HCT116 (cell line): ENCODE measurements at regions of chr4 and their contacts with region 1.

Region 1: GRCh38 chr4:6546681-6547447 is 28.1 kb upstream of the MAN2B2 start:
- DNase-seq: peak; percentile 57
- ATAC-seq: peak; percentile 82
- H3K4me3 ChIP-seq: no peak overlapping the region
- H3K27ac ChIP-seq: no peak overlapping the region
- H3K4me1 ChIP-seq: peaks cover 0 to 3% of the 10 kb centered on the region in 2 experiments; a peak in 1 of 4 replicates
- H3K27me3 ChIP-seq: peaks cover 28% of the 10 kb centered on the region
- CTCF ChIP-seq: peak; percentile 87 to 97 (median 94)
- POLR2A ChIP-seq: no peak
- RAD21 ChIP-seq: peak; percentile 80

Region 2: DNA sequence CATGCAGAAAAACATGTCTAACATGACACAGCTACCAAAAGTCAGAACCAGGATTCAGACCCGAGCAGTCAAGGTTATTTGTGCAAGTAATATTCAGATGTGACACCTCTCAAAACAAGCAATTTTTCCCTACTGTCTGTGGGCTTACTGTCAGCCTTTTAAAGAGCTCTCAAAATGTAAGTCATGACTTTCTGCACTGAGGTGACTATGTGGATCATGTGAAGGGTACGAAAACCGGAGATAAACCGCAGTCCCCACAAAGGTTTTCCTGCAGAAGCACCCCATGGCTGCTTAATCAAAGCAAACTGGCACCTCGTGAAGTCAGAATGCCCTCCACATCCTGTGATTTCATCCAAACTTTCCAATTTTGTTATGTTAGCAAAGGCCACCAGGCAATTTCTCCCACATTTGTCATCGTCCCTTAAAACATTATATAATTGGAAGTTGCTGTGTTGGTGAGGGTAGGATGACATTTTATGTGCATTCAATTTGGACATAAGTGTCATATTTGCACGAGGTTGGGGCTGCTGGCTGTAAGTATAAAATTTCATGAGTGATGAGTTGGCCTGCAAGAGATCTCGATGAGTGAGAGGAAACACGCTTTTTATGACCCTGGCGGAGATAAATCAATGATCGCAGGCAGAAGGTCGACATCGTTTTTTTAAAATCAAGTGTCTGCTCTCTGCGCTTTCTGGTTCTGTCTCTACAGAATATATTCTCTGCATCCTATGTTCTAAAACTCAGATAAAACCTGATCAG is 1334.4 kb before region 1 on chr4:
- CTCF ChIA-PET with region 1: no interaction called
- POLR2A ChIA-PET with region 1: no interaction called
- RAD21 ChIA-PET with region 1: no interaction called
- intact Hi-C with region 1: no loop called
- DNase-seq: no peak
- ATAC-seq: no peak
- H3K4me3 ChIP-seq: no peak overlapping the region
- H3K27ac ChIP-seq: no peak overlapping the region
- H3K4me1 ChIP-seq: no peaks in the 10 kb centered on the region
- H3K27me3 ChIP-seq: peaks cover 52% of the 10 kb centered on the region
- CTCF ChIP-seq: no peak
- POLR2A ChIP-seq: no peak
- RAD21 ChIP-seq: no peak

Region 3: GRCh38 chr4:6437826-6438238 is 109.0 kb before region 1 on chr4:
- CTCF ChIA-PET with region 1: no interaction called
- POLR2A ChIA-PET with region 1: no interaction called
- RAD21 ChIA-PET with region 1: no interaction called
- intact Hi-C with region 1: no loop called
- DNase-seq: no peak
- ATAC-seq: no peak
- H3K4me3 ChIP-seq: no peak overlapping the region
- H3K27ac ChIP-seq: no peak overlapping the region
- H3K4me1 ChIP-seq: no peaks in the 10 kb centered on the region; a peak in 1 of 4 replicates
- H3K27me3 ChIP-seq: no peaks in the 10 kb centered on the region
- CTCF ChIP-seq: no peak
- POLR2A ChIP-seq: no peak
- RAD21 ChIP-seq: no peak

Region 4: DNA sequence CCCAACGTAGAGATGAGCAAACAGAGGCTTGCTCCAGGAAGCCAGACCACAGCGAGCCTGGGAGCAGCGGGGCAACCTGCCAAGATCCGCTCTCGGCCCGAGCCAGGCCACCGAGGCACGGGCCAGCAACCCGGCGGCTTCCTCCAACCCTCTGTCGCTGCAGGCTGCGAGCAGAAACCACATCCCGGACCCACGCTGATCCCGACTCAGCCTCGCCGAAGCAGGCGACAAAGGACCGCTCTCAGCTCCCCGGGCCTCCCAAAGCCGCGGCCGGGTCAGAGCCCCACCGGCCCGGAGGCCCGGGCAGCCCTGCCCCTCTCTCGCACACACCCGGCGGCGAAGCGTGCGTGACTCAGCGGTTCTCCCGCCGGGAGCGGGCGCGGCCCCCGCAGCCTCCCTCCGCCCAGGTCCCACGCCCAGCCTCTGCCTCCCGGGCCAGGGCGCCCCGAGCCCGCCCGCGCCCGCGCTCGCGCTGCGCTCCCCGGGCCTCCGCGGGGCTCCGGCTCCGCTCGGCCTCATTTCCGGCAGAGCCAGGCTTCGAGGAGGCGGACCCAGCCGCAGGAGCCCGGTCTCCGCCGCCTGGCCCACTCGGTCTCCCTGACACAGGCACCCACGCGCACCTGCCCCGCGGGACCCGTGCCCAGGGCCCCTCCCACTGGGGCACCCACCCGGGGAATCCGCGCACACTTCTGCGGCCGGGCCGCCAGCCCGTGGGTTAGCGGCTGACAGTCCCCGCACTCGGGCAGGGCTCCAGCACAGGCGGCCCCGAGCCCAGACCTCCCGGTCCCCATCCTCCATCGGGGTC is 76.2 kb before region 1 on chr4:
- CTCF ChIA-PET with region 1: interaction called, 6 read pairs
- POLR2A ChIA-PET with region 1: no interaction called
- RAD21 ChIA-PET with region 1: no interaction called
- intact Hi-C with region 1: loop called (anchors 5 kb)
- DNase-seq: no peak
- ATAC-seq: peak; percentile 67
- H3K4me3 ChIP-seq: peak overlapping the region; percentile 58 to 73
- H3K27ac ChIP-seq: peak overlapping the region; percentile 82
- H3K4me1 ChIP-seq: peaks cover 5 to 36% of the 10 kb centered on the region in 2 experiments; a peak in 3 of 4 replicates
- H3K27me3 ChIP-seq: no peaks in the 10 kb centered on the region
- CTCF ChIP-seq: no peak
- POLR2A ChIP-seq: no peak
- RAD21 ChIP-seq: no peak